B cell (primary cell): ENCODE measurements at regions of chr16 and their contacts with region 1.

Region 1: GRCh38 chr16:13378151-13378550 is 476.8 kb downstream of the SHISA9 start:
- DNase-seq: no peak
- ATAC-seq: no peak
- H3K4me3 ChIP-seq: no peak overlapping the region
- H3K4me3 Mint-ChIP-seq: no peak overlapping the region
- H3K27ac ChIP-seq: no peak overlapping the region
- H3K27ac Mint-ChIP-seq: no peak overlapping the region
- H3K4me1 ChIP-seq: no peaks in the 10 kb centered on the region
- H3K4me1 Mint-ChIP-seq: no peaks in the 10 kb centered on the region
- H3K27me3 ChIP-seq: no peaks in the 10 kb centered on the region
- H3K27me3 Mint-ChIP-seq: no peaks in the 10 kb centered on the region
- CTCF ChIP-seq: no peak

Region 2: DNA sequence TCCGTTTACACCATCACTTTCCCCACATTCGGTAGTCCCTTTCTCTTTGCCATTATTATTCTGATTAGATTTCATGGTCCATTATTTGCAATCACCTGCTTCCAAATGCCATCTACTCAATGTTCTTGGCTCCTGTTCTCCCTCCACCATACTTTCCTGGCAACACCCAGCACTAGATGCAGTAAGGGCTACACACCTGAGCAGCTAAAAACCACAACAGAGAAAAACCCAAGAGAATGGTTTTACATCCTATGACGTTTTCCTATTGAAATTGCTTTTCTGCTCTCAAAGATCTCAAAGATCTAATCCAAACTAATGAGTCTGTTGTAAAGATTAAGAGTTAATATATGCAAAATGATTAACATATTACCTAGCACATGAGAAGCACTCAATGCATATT is 35.5 kb before region 1 on chr16:
- CTCF ChIA-PET with region 1: no interaction called
- POLR2A ChIA-PET with region 1: no interaction called
- intact Hi-C with region 1: loop called (anchors 2 kb)
- DNase-seq: no peak
- ATAC-seq: no peak
- H3K4me3 ChIP-seq: no peak overlapping the region
- H3K4me3 Mint-ChIP-seq: no peak overlapping the region
- H3K27ac ChIP-seq: no peak overlapping the region
- H3K27ac Mint-ChIP-seq: no peak overlapping the region
- H3K4me1 ChIP-seq: no peaks in the 10 kb centered on the region
- H3K4me1 Mint-ChIP-seq: no peaks in the 10 kb centered on the region
- H3K27me3 ChIP-seq: no peaks in the 10 kb centered on the region
- H3K27me3 Mint-ChIP-seq: no peaks in the 10 kb centered on the region
- CTCF ChIP-seq: no peak

Region 3: GRCh38 chr16:13414154-13414553 is 36.0 kb after region 1 on chr16:
- CTCF ChIA-PET with region 1: no interaction called
- POLR2A ChIA-PET with region 1: no interaction called
- intact Hi-C with region 1: no loop called
- DNase-seq: no peak
- ATAC-seq: no peak
- H3K4me3 ChIP-seq: no peak overlapping the region
- H3K4me3 Mint-ChIP-seq: no peak overlapping the region
- H3K27ac ChIP-seq: no peak overlapping the region
- H3K27ac Mint-ChIP-seq: no peak overlapping the region
- H3K4me1 ChIP-seq: no peaks in the 10 kb centered on the region
- H3K4me1 Mint-ChIP-seq: no peaks in the 10 kb centered on the region
- H3K27me3 ChIP-seq: no peaks in the 10 kb centered on the region
- H3K27me3 Mint-ChIP-seq: no peaks in the 10 kb centered on the region
- CTCF ChIP-seq: no peak